ENCODE measurements at regions of chr1 and their contacts with region 1.

Region 1: DNA sequence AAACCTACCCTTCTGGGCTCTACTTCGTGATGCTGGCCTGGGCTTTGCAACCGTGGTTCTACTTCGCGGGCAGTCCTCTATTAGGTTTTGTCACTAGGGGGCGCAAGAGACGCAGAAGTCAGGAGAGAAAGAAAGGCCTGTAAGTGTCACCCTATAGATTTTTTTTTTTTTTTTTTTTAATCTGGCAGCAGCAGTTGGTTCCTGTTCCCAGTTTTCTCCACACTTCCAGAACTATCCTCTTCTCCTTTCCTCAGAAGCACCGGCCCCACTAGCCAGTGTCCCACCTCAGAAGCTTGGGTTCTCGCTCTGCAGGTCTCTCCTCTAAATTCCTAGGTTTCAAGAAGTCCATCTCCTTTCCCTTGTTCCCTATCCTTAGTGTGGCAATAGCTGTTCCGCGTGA is 9.1 kb upstream of the LCE2D start:
- DNase-seq: peak; percentile 78
- H3K4me3 Mint-ChIP-seq: no peak overlapping the region
- H3K27ac Mint-ChIP-seq: no peak overlapping the region
- H3K4me1 Mint-ChIP-seq: peaks cover 3% of the 10 kb centered on the region
- H3K27me3 Mint-ChIP-seq: peaks cover 10% of the 10 kb centered on the region

Region 2: GRCh38 chr1:153192697-153193096 is 538.6 kb after region 1 on chr1:
- CTCF ChIA-PET with region 1: interaction called, 5 read pairs
- intact Hi-C with region 1: loop called (anchors 10 kb)
- DNase-seq: peak; percentile 17
- H3K4me3 Mint-ChIP-seq: no peak overlapping the region
- H3K27ac Mint-ChIP-seq: no peak overlapping the region
- H3K4me1 Mint-ChIP-seq: no peaks in the 10 kb centered on the region
- H3K27me3 Mint-ChIP-seq: peaks cover 28% of the 10 kb centered on the region

Region 3: GRCh38 chr1:153220606-153221303 is 566.6 kb after region 1 on chr1:
- CTCF ChIA-PET with region 1: interaction called, 12 read pairs
- intact Hi-C with region 1: loop called (anchors 1 kb)
- DNase-seq: no peak
- H3K4me3 Mint-ChIP-seq: no peak overlapping the region
- H3K27ac Mint-ChIP-seq: no peak overlapping the region
- H3K4me1 Mint-ChIP-seq: no peaks in the 10 kb centered on the region
- H3K27me3 Mint-ChIP-seq: peaks cover 4% of the 10 kb centered on the region